ENCODE measurements at regions of chr2 and their contacts with region 1.

Region 1: DNA sequence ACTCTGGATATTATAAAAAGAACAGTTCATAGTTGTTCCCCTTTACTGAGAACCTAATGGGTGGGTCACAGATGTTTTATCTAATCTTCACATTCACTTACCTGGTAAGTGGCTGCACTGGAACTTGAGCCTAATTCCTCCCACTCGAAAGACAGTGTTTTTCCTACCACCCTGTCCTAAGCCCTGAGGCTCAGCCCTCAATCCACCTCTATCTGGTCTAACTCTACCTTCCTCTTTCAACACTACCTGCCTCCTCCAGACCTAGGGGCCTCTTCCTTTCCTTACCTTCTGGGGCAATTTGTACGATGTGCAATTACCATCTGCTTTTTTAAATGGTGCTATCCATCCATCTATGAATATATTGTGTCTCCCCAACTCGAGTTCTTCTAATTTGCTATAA is 9.7 kb upstream of the KIF3C start:
- DNase-seq: no peak
- ATAC-seq: peak; percentile 70 to 71; a peak in 5 of 6 replicates
- H3K4me3 ChIP-seq: 0 out of 3 replicates have a peak overlapping the region, but pooled peaks have one; percentile 5
- H3K27ac ChIP-seq: peak overlapping the region; percentile 80 to 93
- H3K4me1 ChIP-seq: peaks cover 25% of the 10 kb centered on the region
- CTCF ChIP-seq: no peak
- EP300 ChIP-seq: no peak
- POLR2A ChIP-seq: no peak
- RAD21 ChIP-seq: no peak

Region 2: GRCh38 chr2:25851740-25852503 is 140.0 kb before region 1 on chr2:
- CTCF ChIA-PET with region 1: interaction called, 10 read pairs
- POLR2A ChIA-PET with region 1: no interaction called
- DNase-seq: peak; percentile 68 to 87
- ATAC-seq: peak; percentile 93 to 94
- H3K4me3 ChIP-seq: 0 out of 3 replicates have a peak overlapping the region, but pooled peaks have one; percentile 16
- H3K27ac ChIP-seq: peak overlapping the region; percentile 62 to 86
- H3K4me1 ChIP-seq: peaks cover 15% of the 10 kb centered on the region; the same call in 2 of the 3 replicates
- CTCF ChIP-seq: peak; percentile 97
- EP300 ChIP-seq: no peak
- POLR2A ChIP-seq: no peak
- RAD21 ChIP-seq: peak; percentile 86 to 87

Region 3: GRCh38 chr2:26008822-26009566 is 17.0 kb after region 1 on chr2:
- CTCF ChIA-PET with region 1: interaction called, 47 read pairs
- POLR2A ChIA-PET with region 1: interaction called, 4 read pairs
- DNase-seq: peak; percentile 68 to 91
- ATAC-seq: peak; percentile 46 to 55
- H3K4me3 ChIP-seq: no peak overlapping the region
- H3K27ac ChIP-seq: peak overlapping the region; percentile 90 to 93
- H3K4me1 ChIP-seq: peaks cover 52% of the 10 kb centered on the region
- CTCF ChIP-seq: no peak
- EP300 ChIP-seq: peak; percentile 50 to 74; a peak in 2 of 5 replicates
- POLR2A ChIP-seq: no peak
- RAD21 ChIP-seq: peak in 1 of 2 experiments; percentile 26; a peak in 2 of 5 replicates

Region 4: GRCh38 chr2:26025509-26025908 is 33.5 kb after region 1 on chr2:
- CTCF ChIA-PET with region 1: interaction called, 12 read pairs
- POLR2A ChIA-PET with region 1: interaction called, 3 read pairs
- DNase-seq: no peak
- ATAC-seq: peak in 1 of 2 experiments; percentile 11; a peak in 1 of 6 replicates
- H3K4me3 ChIP-seq: no peak overlapping the region
- H3K27ac ChIP-seq: peak overlapping the region in 1 of 2 experiments; percentile 9; a peak in 2 of 6 replicates
- H3K4me1 ChIP-seq: peaks cover 4% of the 10 kb centered on the region; the same call in 2 of the 3 replicates
- CTCF ChIP-seq: no peak
- EP300 ChIP-seq: no peak
- POLR2A ChIP-seq: no peak
- RAD21 ChIP-seq: no peak

Region 5: DNA sequence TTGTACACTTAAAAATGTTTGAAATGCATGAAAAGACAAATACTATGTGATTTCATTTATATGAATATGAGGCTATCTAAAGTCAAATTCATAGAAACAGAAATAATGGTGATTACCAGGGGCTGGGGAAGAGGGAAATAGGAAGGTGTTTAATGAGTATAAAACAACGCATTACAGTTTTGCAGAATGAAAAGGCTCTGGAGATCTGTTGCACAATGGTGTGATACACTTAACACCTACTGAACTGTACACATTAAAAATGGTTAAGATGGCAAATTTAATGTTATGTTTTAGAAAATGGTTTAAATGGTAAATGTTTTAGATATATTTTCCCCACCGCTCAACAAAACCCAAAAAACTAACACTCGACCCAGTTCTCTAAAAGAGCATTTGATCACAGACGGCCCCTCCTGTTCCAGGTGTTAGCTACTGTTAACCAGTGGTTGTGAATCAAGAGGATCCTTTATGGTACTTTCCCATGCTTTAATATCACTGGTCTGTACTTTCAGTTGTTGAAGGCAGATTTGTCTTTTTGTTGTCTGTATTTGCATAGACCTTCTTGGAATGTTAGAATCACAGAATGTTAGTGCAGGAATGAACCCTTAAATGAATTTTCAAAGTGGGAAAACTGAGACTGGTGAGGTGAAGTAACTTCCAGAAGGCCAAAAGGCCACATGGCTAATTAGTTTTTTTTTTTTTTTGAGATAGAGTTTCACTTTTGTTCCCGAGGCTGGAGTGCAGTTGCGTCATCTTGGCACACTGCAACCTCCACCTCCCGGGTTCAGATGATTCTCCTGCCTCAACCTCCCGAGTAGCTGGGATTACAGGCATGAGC is 52.1 kb after region 1 on chr2:
- CTCF ChIA-PET with region 1: interaction called, 19 read pairs
- POLR2A ChIA-PET with region 1: interaction called, 3 read pairs
- DNase-seq: no peak
- ATAC-seq: peak; percentile 15 to 32; a peak in 5 of 6 replicates
- H3K4me3 ChIP-seq: peak overlapping the region; percentile 13; the same call in 1 of the 3 replicates
- H3K27ac ChIP-seq: peak overlapping the region; percentile 47 to 74; a peak in 5 of 6 replicates
- H3K4me1 ChIP-seq: peaks cover 71% of the 10 kb centered on the region
- CTCF ChIP-seq: no peak
- EP300 ChIP-seq: no peak
- POLR2A ChIP-seq: no peak
- RAD21 ChIP-seq: no peak

Region 6: GRCh38 chr2:26072925-26073768 is 81.2 kb after region 1 on chr2:
- CTCF ChIA-PET with region 1: interaction called, 12 read pairs
- POLR2A ChIA-PET with region 1: interaction called, 3 read pairs
- DNase-seq: peak in 1 of 2 experiments; percentile 45
- ATAC-seq: peak; percentile 26 to 51; a peak in 3 of 6 replicates
- H3K4me3 ChIP-seq: no peak overlapping the region
- H3K27ac ChIP-seq: peak overlapping the region in 1 of 2 experiments; percentile 21; a peak in 3 of 6 replicates
- H3K4me1 ChIP-seq: peaks cover 97% of the 10 kb centered on the region
- CTCF ChIP-seq: no peak
- EP300 ChIP-seq: no peak
- POLR2A ChIP-seq: no peak
- RAD21 ChIP-seq: no peak